ENCODE measurements at regions of chr11 and their contacts with region 1.

Region 1: DNA sequence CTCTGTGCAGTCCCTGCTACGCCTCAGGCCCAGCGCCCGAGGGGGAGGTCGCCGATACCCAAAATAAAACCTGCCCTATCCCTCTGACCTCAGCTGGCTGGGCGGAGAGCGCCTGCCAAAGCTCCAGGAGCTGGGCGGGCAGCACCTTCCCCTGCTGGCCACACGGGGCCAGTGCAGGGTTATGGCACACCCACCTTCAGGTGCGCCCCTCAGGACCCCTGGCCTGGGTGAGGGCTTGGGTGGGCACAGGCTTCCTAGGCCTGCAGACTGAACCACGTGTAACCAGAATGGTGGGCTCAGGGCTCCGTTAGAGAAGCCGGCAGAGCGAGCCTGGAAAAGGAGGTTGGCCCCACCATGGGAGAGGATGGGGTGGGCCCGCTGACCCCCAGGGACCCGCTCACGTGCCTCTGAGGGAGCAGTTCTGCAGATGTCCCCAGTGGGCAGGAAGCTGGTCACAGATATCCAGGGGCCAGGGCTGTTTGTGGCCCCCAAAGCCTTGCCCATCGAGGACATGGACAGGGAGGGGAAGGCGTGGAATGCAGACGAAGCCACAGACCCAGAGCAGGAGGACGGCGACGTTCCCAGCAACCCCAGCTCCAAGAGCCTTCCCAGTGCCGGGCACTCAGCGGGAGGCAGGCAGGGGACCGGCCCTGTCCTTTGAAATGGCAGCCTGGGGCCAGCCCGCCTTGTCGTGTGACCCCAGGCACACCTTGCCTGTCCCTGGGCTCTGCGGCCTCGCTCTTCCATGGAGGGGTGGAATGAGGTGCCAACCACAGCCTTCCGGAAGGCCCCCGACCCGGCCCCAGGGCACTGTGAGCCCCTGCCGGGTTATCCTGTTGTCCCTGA is 1.6 kb upstream of the TNNT3 start:
- DNase-seq: no peak
- ATAC-seq: peak; percentile 43
- H3K4me3 ChIP-seq: no peak overlapping the region
- H3K27ac ChIP-seq: no peak overlapping the region
- H3K4me1 ChIP-seq: peaks cover 9% of the 10 kb centered on the region
- H3K27me3 ChIP-seq: no peaks in the 10 kb centered on the region
- CTCF ChIP-seq: peak; percentile 86; the same call in 1 of the 2 replicates

Region 2: DNA sequence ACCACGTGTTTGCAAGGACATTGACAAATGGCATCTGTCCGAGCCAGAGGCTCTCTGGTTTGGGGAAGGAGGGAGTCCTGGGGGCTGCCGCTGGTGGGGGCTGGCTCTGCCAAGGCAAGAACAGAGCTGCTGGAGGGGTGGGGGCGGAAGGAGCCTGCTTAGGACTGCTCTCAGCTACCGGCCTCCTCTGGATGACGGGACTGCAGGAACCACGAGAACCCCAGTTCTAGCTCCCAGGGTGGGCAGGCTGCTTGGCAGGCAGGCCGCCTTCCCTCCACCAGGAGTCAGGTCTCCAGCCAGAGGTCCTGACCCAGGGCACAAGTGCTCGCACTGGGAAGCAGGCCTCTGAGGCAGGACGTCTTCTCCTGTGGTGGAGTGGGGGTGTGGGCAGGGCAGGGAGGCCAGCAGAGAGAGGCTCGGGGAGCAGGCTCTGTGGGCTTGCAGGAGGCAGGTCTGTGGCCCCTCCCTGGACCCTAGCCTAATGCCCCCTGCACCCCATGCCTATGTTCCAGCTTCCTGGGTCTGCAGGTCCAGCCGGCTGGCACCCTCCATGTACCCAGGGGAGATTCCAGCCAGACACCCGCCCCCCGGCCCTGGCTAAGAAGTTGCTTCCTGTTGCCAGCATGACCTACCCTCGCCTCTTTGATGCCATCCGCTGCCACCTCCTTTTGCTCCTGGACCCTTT is 26.5 kb before region 1 on chr11 and contains the start of gene PRR33:
- CTCF ChIA-PET with region 1: interaction called, 3 read pairs
- POLR2A ChIA-PET with region 1: no interaction called
- in situ Hi-C with region 1: no loop called
- intact Hi-C with region 1: loop called (anchors 1 kb)
- DNase-seq: no peak
- ATAC-seq: peak; percentile 32; the same call in 1 of the 2 replicates
- H3K4me3 ChIP-seq: no peak within 1 kb of the TSS
- H3K27ac ChIP-seq: no peak within 1 kb of the TSS
- H3K4me1 ChIP-seq: no peaks in the 10 kb centered on the region
- H3K27me3 ChIP-seq: peaks cover 4% of the 10 kb centered on the region; the same call in 1 of the 2 replicates
- CTCF ChIP-seq: no peak
- total RNA-seq, gene PRR33: not detected